HEK293T (cell line): ENCODE measurements at regions of chr20 and their contacts with region 1.

Region 1: DNA sequence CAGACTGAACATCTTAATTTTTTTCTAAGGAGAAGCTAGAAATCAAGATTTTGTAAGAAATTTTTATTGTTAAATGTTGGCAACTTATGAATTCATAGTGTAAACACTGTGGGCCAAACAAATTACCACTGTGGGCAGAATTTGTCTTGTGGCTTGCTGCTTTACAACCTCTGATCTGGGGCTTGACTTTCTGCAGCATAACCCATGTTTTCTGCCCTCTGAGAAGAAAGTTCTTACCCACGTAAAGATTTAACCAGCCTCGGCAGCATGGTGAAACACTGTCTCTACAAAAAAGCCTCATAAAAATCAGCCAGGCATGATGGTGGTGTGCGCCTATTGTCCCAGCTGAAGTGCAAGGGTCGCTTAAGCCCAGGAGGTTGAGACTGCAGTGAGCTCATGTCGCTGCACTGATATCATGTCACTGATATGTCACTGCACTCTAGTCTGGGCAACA is 12.9 kb downstream of the ITCH start:
- DNase-seq: no peak

Region 2: GRCh38 chr20:34363062-34363464 is 12.9 kb before region 1 on chr20 and contains the start of gene ITCH:
- CTCF ChIA-PET with region 1: no interaction called
- POLR2A ChIA-PET with region 1: interaction called, 16 read pairs
- DNase-seq: peak; percentile 95